ENCODE measurements at regions of chr1 and their contacts with region 1.

Region 1: DNA sequence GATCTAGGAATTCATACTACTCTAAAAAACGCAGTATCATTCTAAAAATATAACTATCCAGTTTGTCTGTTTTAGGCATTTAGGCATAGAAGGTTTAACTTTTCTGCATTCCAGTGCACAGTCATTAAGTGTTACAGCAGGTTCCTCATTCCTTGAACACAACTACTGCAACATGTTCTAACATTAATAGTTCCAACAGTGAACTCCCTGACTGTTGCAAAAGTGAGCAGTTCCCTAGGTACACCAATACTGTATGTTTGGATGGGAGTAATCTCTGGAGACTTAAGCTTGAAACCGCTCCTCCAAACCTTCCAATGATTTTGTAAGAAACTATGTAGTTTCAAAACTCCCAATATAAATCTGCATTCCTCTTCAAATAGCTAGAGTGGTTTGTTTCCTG is 46.2 kb downstream of the UCHL5 start:
- DNase-seq: no peak
- ATAC-seq: no peak
- H3K4me3 ChIP-seq: no peak overlapping the region
- H3K27ac ChIP-seq: no peak overlapping the region
- H3K4me1 ChIP-seq: no peaks in the 10 kb centered on the region
- H3K27me3 ChIP-seq: no peaks in the 10 kb centered on the region
- CTCF ChIP-seq: no peak
- EP300 ChIP-seq: no peak
- POLR2A ChIP-seq: no peak
- RAD21 ChIP-seq: no peak

Region 2: DNA sequence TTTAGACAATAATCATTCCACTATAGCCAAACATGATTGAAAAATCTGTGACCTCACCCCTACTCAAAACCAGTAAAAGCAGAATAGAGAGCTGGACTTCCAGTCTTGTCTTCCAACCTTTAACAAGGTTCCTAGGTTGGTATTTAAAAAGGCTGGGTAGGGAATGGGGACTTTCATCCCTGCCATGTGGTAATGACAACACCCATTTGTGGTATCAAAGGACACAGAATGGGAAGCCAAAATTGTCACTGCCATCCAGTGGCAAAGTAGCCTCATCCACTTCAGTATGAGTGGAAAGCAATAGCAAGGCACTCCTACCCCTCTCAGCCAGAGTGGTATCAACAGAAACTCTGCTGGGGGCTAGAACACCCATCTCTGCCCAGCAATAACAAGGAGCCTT is 12.2 kb after region 1 on chr1:
- CTCF ChIA-PET with region 1: interaction called, 15 read pairs
- POLR2A ChIA-PET with region 1: no interaction called
- RAD21 ChIA-PET with region 1: interaction called, 3 read pairs
- SMC1A ChIA-PET with region 1: interaction called, 8 read pairs
- in situ Hi-C with region 1: no loop called
- intact Hi-C with region 1: no loop called
- DNase-seq: no peak
- ATAC-seq: no peak
- H3K4me3 ChIP-seq: no peak overlapping the region
- H3K27ac ChIP-seq: no peak overlapping the region
- H3K4me1 ChIP-seq: no peaks in the 10 kb centered on the region
- H3K27me3 ChIP-seq: no peaks in the 10 kb centered on the region
- CTCF ChIP-seq: no peak
- EP300 ChIP-seq: no peak
- POLR2A ChIP-seq: no peak
- RAD21 ChIP-seq: no peak